ENCODE measurements at regions of chr1 and their contacts with region 1.

Region 1: DNA sequence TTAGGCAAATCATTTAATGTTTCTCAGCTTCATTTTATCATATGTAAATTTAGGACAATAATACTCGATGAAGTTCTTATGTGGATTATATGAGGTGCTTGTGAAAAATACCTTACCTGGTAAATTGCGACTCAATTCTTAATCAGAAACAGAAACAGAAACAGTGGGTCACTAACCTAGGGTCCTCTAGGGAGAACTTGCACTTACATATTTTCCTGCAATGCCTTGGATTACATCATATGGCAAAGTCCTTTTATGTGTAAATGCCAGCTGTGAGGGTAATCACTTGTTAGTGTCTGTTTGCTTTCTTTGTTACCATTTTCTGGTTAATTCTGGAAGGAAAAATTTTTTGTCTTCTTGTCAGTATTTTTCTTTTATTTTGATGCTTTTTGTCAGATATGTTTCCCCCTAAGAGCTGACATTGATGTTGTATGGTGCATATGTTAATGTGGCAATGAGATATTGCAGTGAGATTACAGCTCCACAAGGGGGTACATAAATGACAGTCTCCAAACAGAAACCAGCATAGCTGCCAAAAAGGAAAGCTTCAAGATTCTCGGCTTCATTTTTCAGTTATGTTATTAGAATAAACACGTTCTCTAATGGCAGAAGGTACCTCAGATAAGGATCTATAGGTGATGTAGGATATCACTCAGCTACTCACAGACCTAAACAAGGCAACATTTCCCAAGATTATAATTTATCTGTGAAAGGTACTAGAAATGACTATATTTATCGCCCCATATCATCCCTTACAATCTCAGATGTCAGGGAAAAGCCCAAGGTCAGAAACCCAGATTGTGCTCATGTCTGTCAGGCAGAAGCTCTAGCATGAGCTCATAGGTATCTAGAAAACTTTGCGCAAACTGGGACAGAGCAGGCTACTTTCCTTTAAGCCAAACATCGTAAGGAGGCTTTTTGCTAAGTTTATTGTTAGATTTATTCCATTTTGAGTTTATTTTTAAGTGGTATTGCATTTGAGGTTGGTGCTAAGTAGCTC is 119.9 kb downstream of the FASLG start:
- DNase-seq: peak; percentile 32
- ATAC-seq: peak; percentile 73
- H3K4me3 Mint-ChIP-seq: peak overlapping the region; percentile 16
- H3K27ac Mint-ChIP-seq: peak overlapping the region; percentile 17
- H3K4me1 Mint-ChIP-seq: peaks cover 31% of the 10 kb centered on the region
- H3K27me3 Mint-ChIP-seq: no peaks in the 10 kb centered on the region

Region 2: GRCh38 chr1:172753964-172754363 is 24.8 kb before region 1 on chr1:
- CTCF ChIA-PET with region 1: interaction called, 10 read pairs
- POLR2A ChIA-PET with region 1: no interaction called
- DNase-seq: no peak
- ATAC-seq: peak; percentile 27
- H3K4me3 Mint-ChIP-seq: no peak overlapping the region
- H3K27ac Mint-ChIP-seq: no peak overlapping the region
- H3K4me1 Mint-ChIP-seq: peaks cover 22% of the 10 kb centered on the region
- H3K27me3 Mint-ChIP-seq: no peaks in the 10 kb centered on the region

Region 3: DNA sequence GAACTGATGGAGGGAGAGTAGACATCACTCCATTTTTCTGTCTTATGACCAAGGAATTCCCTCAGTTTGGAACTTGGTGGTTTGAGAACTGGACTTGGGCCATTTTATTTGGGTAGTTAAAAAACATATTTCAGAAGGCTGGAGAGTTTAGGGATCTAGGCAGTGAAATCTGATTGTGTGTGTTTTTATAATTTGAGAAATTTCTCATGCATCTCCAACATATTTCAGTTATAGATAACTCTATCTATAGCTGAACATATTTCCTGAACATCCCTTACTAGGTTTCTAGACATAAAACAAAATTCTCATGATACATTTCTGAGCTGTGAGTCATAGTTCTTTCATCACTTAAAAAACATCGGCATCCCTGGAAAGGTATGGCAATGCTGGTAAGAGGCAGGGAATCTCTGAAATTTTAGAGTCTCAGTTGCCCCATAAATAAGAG is 17.2 kb before region 1 on chr1:
- CTCF ChIA-PET with region 1: interaction called, 14 read pairs
- POLR2A ChIA-PET with region 1: interaction called, 3 read pairs
- DNase-seq: no peak
- ATAC-seq: no peak
- H3K4me3 Mint-ChIP-seq: no peak overlapping the region
- H3K27ac Mint-ChIP-seq: no peak overlapping the region
- H3K4me1 Mint-ChIP-seq: peaks cover 25% of the 10 kb centered on the region
- H3K27me3 Mint-ChIP-seq: no peaks in the 10 kb centered on the region

Region 4: GRCh38 chr1:172818841-172819527 is 40.2 kb after region 1 on chr1:
- CTCF ChIA-PET with region 1: interaction called, 23 read pairs
- POLR2A ChIA-PET with region 1: interaction called, 6 read pairs
- DNase-seq: peak; percentile 60
- ATAC-seq: peak; percentile 80
- H3K4me3 Mint-ChIP-seq: peak overlapping the region; percentile 53
- H3K27ac Mint-ChIP-seq: peak overlapping the region; percentile 93
- H3K4me1 Mint-ChIP-seq: peaks cover 49% of the 10 kb centered on the region
- H3K27me3 Mint-ChIP-seq: no peaks in the 10 kb centered on the region

Region 5: DNA sequence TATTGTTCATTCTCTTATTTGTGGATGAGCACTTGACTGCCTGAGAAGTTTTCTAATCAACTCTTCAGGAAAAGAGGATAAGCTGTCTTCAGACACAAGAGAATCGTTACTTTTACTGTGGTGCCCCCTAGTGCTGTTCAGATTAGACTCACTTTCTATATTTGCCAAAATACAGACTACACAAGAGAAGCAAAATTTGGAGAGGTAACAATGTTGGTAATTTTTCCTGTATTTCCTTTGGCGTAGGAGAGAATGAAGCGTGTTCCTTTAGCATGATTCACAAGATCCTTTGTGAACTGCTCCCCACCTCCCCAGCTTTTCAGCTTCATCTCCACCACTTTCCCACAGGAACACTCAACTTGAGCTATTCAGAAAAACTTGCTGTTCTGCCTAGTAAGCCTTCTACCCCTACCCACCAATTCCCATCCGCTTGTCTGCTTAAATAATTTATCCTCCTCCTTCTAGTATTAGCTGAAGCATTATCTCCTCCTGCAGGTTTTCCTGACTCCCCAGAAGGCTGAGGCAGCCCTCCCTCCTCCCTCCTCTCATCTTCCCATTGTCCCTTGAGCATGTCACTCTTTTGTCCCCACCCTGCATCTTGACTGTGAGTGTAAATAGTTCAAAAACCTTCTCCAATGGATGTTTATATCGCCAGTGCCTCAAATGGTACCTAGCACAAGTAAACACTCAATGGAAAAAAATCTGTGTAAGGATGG is 423.8 kb after region 1 on chr1:
- CTCF ChIA-PET with region 1: interaction called, 44 read pairs
- POLR2A ChIA-PET with region 1: interaction called, 3 read pairs
- DNase-seq: peak; percentile 52
- ATAC-seq: no peak
- H3K4me3 Mint-ChIP-seq: no peak overlapping the region
- H3K27ac Mint-ChIP-seq: no peak overlapping the region
- H3K4me1 Mint-ChIP-seq: peaks cover 50% of the 10 kb centered on the region
- H3K27me3 Mint-ChIP-seq: peaks cover 2% of the 10 kb centered on the region

Measured in activated CD8-positive, alpha-beta T cell treated with anti-CD3 and anti-CD28 coated beads, Interleukin-2, amount 10 ng/mL, durations not matched to agents 7 days and 5 days (primary cell).